MCF 10A (cell line): ENCODE measurements at regions of chr13 and their contacts with region 1.

Region 1: DNA sequence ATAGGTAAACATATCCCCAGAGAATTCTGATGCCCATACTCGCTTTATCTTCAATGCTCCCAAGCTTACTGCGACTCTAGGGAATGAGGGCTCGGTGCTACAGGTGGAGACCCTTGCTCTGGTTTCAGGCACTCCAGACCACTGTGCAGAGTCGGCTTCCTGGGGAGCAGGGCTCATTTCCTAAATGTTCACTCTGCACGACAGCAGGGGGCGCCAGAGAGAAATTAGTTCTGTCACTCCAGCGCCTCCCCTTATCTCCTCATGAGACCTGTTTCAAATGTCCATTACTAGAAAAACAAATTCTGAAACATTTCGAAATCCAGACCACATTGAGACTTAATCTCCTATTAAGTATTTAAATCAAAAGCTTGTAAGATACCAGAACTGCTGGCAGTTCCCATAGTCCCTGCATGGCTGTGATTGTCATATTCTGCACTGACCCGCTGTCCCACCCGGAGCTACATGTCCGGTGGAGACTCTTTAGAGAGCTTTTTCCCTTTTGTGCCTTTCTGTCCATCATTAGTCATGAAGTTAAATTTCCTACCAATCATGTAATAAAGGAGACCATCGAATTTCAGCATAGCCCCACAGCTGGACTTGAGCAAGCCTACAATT is 22.4 kb downstream of the EPSTI1 start:
- DNase-seq: peak; percentile 86
- H3K4me3 Mint-ChIP-seq: no peak overlapping the region
- H3K27ac Mint-ChIP-seq: no peak overlapping the region
- H3K4me1 Mint-ChIP-seq: peaks cover 53% of the 10 kb centered on the region
- H3K27me3 Mint-ChIP-seq: no peaks in the 10 kb centered on the region
- CTCF ChIP-seq: peak; percentile 71

Region 2: GRCh38 chr13:42660333-42660965 is 309.2 kb before region 1 on chr13:
- CTCF ChIA-PET with region 1: interaction called, 3 read pairs
- POLR2A ChIA-PET with region 1: no interaction called
- intact Hi-C with region 1: loop called (anchors 10 kb)
- DNase-seq: peak; percentile 31
- H3K4me3 Mint-ChIP-seq: no peak overlapping the region
- H3K27ac Mint-ChIP-seq: no peak overlapping the region
- H3K4me1 Mint-ChIP-seq: no peaks in the 10 kb centered on the region
- H3K27me3 Mint-ChIP-seq: peaks cover 39% of the 10 kb centered on the region
- CTCF ChIP-seq: peak; percentile 35

Region 3: DNA sequence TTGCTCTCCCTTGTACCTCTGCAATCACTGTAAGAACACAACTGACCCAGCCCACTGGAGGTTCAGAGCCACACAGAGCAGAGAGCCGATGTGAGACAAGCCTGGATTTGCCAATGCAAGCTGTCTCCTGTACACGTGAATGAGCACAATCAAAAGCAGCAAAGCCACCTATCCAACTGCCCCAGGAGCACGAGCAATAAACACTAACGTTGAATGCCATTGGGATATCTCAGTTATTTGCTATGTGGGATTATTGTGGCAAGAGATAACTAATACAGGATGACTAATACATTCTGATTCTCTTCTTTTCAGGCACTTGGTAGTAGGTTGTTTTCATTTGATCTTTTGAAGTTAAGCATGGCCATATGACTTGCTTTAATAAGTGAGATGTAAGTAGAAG is 273.5 kb before region 1 on chr13:
- CTCF ChIA-PET with region 1: no interaction called
- POLR2A ChIA-PET with region 1: no interaction called
- intact Hi-C with region 1: no loop called
- DNase-seq: peak; percentile 22
- H3K4me3 Mint-ChIP-seq: no peak overlapping the region
- H3K27ac Mint-ChIP-seq: no peak overlapping the region
- H3K4me1 Mint-ChIP-seq: peaks cover 11% of the 10 kb centered on the region
- H3K27me3 Mint-ChIP-seq: no peaks in the 10 kb centered on the region
- CTCF ChIP-seq: no peak

Region 4: GRCh38 chr13:42991892-42992763 is 22.5 kb after region 1 on chr13 and contains the start of gene EPSTI1:
- CTCF ChIA-PET with region 1: interaction called, 13 read pairs
- POLR2A ChIA-PET with region 1: no interaction called
- intact Hi-C with region 1: loop called (anchors 2 kb)
- DNase-seq: no peak
- H3K4me3 Mint-ChIP-seq: no peak within 1 kb of the TSS
- H3K27ac Mint-ChIP-seq: peak within 1 kb of the TSS; percentile 50
- H3K4me1 Mint-ChIP-seq: peaks cover 16% of the 10 kb centered on the region
- H3K27me3 Mint-ChIP-seq: no peaks in the 10 kb centered on the region
- CTCF ChIP-seq: no peak
- total RNA-seq, gene EPSTI1: not detected in 2 replicates

Region 5: GRCh38 chr13:43085545-43085944 is 115.9 kb after region 1 on chr13:
- CTCF ChIA-PET with region 1: interaction called, 14 read pairs
- POLR2A ChIA-PET with region 1: no interaction called
- intact Hi-C with region 1: loop called (anchors 10 kb)
- DNase-seq: peak; percentile 46
- H3K4me3 Mint-ChIP-seq: no peak overlapping the region
- H3K27ac Mint-ChIP-seq: no peak overlapping the region
- H3K4me1 Mint-ChIP-seq: peaks cover 16% of the 10 kb centered on the region
- H3K27me3 Mint-ChIP-seq: no peaks in the 10 kb centered on the region
- CTCF ChIP-seq: peak; percentile 32

Region 6: DNA sequence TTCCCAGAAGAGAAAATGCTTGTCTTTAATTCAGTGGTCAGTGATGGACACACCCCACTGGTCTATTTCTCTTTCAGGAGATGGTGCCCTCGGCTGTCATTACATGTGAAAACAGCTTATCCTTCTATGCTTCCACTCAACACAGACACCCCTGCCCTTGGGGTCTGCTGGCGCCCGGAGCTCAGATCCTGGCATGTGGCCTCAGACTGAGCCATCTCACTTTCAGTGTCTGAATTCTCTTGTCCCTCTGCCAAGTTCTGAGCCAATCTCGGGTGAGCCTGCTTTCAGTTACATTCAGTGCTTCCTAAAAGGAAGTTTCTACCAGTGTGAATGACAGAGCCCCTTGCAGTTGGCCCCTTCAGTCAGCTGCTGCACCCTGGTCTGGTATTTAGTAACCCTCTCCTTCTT is 347.3 kb after region 1 on chr13:
- CTCF ChIA-PET with region 1: no interaction called
- POLR2A ChIA-PET with region 1: no interaction called
- intact Hi-C with region 1: no loop called
- DNase-seq: peak; percentile 56
- H3K4me3 Mint-ChIP-seq: no peak overlapping the region
- H3K27ac Mint-ChIP-seq: peak overlapping the region; percentile 56
- H3K4me1 Mint-ChIP-seq: peaks cover 6% of the 10 kb centered on the region
- H3K27me3 Mint-ChIP-seq: no peaks in the 10 kb centered on the region
- CTCF ChIP-seq: no peak

Region 7: GRCh38 chr13:43786773-43787517 is 817.3 kb after region 1 on chr13 and contains the start of gene ENOX1:
- CTCF ChIA-PET with region 1: interaction called, 3 read pairs
- POLR2A ChIA-PET with region 1: no interaction called
- intact Hi-C with region 1: loop called (anchors 5 kb)
- DNase-seq: peak; percentile 60
- H3K4me3 Mint-ChIP-seq: peak within 1 kb of the TSS; percentile 80
- H3K27ac Mint-ChIP-seq: peak within 1 kb of the TSS; percentile 23
- H3K4me1 Mint-ChIP-seq: peaks cover 20% of the 10 kb centered on the region
- H3K27me3 Mint-ChIP-seq: no peaks in the 10 kb centered on the region
- CTCF ChIP-seq: peak; percentile 12
- total RNA-seq, gene ENOX1: 1.5 and 1.8 TPM in 2 replicates

Region 8: GRCh38 chr13:43878892-43879754 is 909.5 kb after region 1 on chr13 and contains the start of gene CCDC122:
- CTCF ChIA-PET with region 1: interaction called, 4 read pairs
- POLR2A ChIA-PET with region 1: no interaction called
- intact Hi-C with region 1: loop called (anchors 10 kb)
- DNase-seq: peak; percentile 83
- H3K4me3 Mint-ChIP-seq: peak within 1 kb of the TSS; percentile 93
- H3K27ac Mint-ChIP-seq: peak within 1 kb of the TSS; percentile 98
- H3K4me1 Mint-ChIP-seq: peaks cover 23% of the 10 kb centered on the region
- H3K27me3 Mint-ChIP-seq: no peaks in the 10 kb centered on the region
- CTCF ChIP-seq: no peak
- total RNA-seq, gene CCDC122: 15.7 and 16.3 TPM in 2 replicates